ENCODE measurements at regions of chr6 and their contacts with region 1.

Region 1: GRCh38 chr6:70884074-70884983 is 72.5 kb downstream of the B3GAT2 start:
- DNase-seq: no peak
- ATAC-seq: peak; percentile 82
- H3K4me3 ChIP-seq: no peak overlapping the region
- H3K27ac ChIP-seq: no peak overlapping the region
- H3K4me1 ChIP-seq: no peaks in the 10 kb centered on the region
- H3K27me3 ChIP-seq: no peaks in the 10 kb centered on the region

Region 2: GRCh38 chr6:70520575-70520974 is 363.8 kb before region 1 on chr6:
- intact Hi-C with region 1: loop called in 1 of 2 experiments (anchors 10 kb)
- DNase-seq: no peak
- ATAC-seq: no peak
- H3K4me3 ChIP-seq: no peak overlapping the region
- H3K27ac ChIP-seq: no peak overlapping the region
- H3K4me1 ChIP-seq: no peaks in the 10 kb centered on the region
- H3K27me3 ChIP-seq: no peaks in the 10 kb centered on the region

Region 3: DNA sequence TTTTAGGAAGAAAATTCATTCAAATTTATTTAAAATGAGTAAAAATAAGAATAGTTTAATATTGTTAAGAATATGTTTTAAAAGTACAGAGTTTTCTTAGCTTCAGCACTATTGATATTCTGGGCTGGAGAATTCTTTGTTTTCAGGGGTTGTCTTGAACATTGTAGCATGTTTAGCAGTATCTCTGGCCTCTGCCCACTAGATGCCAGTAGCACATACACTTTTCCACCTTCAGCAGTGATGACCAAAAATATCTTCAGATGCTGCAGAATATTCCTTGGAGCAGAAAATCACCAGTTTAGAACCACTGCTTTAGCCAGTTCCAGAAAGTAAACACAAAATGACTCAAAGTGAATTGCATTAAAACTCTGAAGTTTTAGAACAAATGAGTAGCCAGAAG is 337.0 kb before region 1 on chr6:
- intact Hi-C with region 1: loop called in 1 of 2 experiments (anchors 5 kb)
- DNase-seq: no peak
- ATAC-seq: no peak
- H3K4me3 ChIP-seq: no peak overlapping the region
- H3K27ac ChIP-seq: no peak overlapping the region
- H3K4me1 ChIP-seq: no peaks in the 10 kb centered on the region
- H3K27me3 ChIP-seq: no peaks in the 10 kb centered on the region

Region 4: GRCh38 chr6:70706491-70707123 is 177.7 kb before region 1 on chr6:
- intact Hi-C with region 1: loop called (anchors 1 to 2 kb)
- DNase-seq: no peak
- ATAC-seq: no peak
- H3K4me3 ChIP-seq: no peak overlapping the region
- H3K27ac ChIP-seq: no peak overlapping the region
- H3K4me1 ChIP-seq: no peaks in the 10 kb centered on the region
- H3K27me3 ChIP-seq: no peaks in the 10 kb centered on the region

Measured in aorta (tissue), 5 donors.